ENCODE measurements at regions of chr2 and their contacts with region 1.

Region 1: DNA sequence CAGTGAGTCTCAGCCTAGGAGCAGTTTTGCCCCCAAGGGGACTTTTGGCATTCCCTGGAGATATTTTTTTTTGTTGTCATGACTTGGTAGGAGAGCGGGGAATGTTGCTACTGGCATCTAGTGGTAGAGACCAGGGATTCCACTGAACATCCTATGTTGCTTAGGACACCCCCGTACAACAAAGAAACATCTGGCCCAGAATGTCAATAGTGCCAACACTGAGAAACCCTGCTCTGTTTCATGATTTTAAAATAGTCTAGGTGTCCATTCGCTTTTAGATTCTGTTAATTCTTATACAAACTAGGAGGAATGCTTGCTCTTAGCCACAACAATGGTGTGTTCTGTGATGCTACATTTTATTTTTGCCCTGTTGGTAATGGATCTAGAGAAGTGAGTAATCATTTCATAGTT is 225.8 kb upstream of the SIX3 start:
- DNase-seq: peak; percentile 52
- H3K4me3 Mint-ChIP-seq: no peak overlapping the region
- H3K27ac Mint-ChIP-seq: no peak overlapping the region
- H3K4me1 Mint-ChIP-seq: no peaks in the 10 kb centered on the region
- H3K27me3 Mint-ChIP-seq: no peaks in the 10 kb centered on the region
- CTCF ChIP-seq: peak; percentile 60

Region 2: GRCh38 chr2:44392338-44392943 is 323.2 kb before region 1 on chr2:
- CTCF ChIA-PET with region 1: interaction called, 11 read pairs
- POLR2A ChIA-PET with region 1: no interaction called
- intact Hi-C with region 1: loop called (anchors 1 kb)
- DNase-seq: peak; percentile 67
- H3K4me3 Mint-ChIP-seq: no peak overlapping the region
- H3K27ac Mint-ChIP-seq: no peak overlapping the region
- H3K4me1 Mint-ChIP-seq: no peaks in the 10 kb centered on the region
- H3K27me3 Mint-ChIP-seq: no peaks in the 10 kb centered on the region
- CTCF ChIP-seq: peak; percentile 58

Region 3: GRCh38 chr2:44560352-44560751 is 155.3 kb before region 1 on chr2:
- CTCF ChIA-PET with region 1: interaction called, 21 read pairs
- POLR2A ChIA-PET with region 1: interaction called, 3 read pairs
- intact Hi-C with region 1: loop called (anchors 1 kb)
- DNase-seq: peak; percentile 45
- H3K4me3 Mint-ChIP-seq: no peak overlapping the region
- H3K27ac Mint-ChIP-seq: no peak overlapping the region
- H3K4me1 Mint-ChIP-seq: peaks cover 15% of the 10 kb centered on the region
- H3K27me3 Mint-ChIP-seq: no peaks in the 10 kb centered on the region
- CTCF ChIP-seq: peak; percentile 30

Region 4: GRCh38 chr2:45264227-45265225 is 548.9 kb after region 1 on chr2:
- CTCF ChIA-PET with region 1: no interaction called
- POLR2A ChIA-PET with region 1: no interaction called
- intact Hi-C with region 1: no loop called
- DNase-seq: no peak
- H3K4me3 Mint-ChIP-seq: no peak overlapping the region
- H3K27ac Mint-ChIP-seq: no peak overlapping the region
- H3K4me1 Mint-ChIP-seq: no peaks in the 10 kb centered on the region
- H3K27me3 Mint-ChIP-seq: no peaks in the 10 kb centered on the region
- CTCF ChIP-seq: no peak

Measured in MCF 10A (cell line).